CD4-positive, alpha-beta T cell (primary cell): ENCODE measurements at regions of chr22 and their contacts with region 1.

Region 1: GRCh38 chr22:39532215-39533071 is at the start of gene RPS19BP1:
- DNase-seq: peak; percentile 98 to 100 (median 99)
- ATAC-seq: peak; percentile 85
- H3K4me3 ChIP-seq: peak within 1 kb of the TSS; percentile 73
- H3K4me3 Mint-ChIP-seq: peak within 1 kb of the TSS; percentile 98
- H3K27ac ChIP-seq: peak within 1 kb of the TSS; percentile 74 to 91
- H3K27ac Mint-ChIP-seq: peak within 1 kb of the TSS; percentile 90
- H3K4me1 ChIP-seq: peaks cover 67% of the 10 kb centered on the region
- H3K4me1 Mint-ChIP-seq: peaks cover 64% of the 10 kb centered on the region
- H3K27me3 ChIP-seq: no peaks in the 10 kb centered on the region
- H3K27me3 Mint-ChIP-seq: no peaks in the 10 kb centered on the region
- CTCF ChIP-seq: no peak
- total RNA-seq, gene RPS19BP1: 65.8 to 69.7 TPM

Region 2: GRCh38 chr22:39170825-39171622 is 361.4 kb before region 1 on chr22:
- CTCF ChIA-PET with region 1: interaction called, 4 read pairs
- POLR2A ChIA-PET with region 1: interaction called, 4 read pairs
- intact Hi-C with region 1: loop called in 1 of 2 experiments (anchors 1 kb)
- DNase-seq: peak; percentile 63 to 90 (median 84)
- ATAC-seq: peak; percentile 74
- H3K4me3 ChIP-seq: peak overlapping the region; percentile 41
- H3K4me3 Mint-ChIP-seq: peak overlapping the region; percentile 69
- H3K27ac ChIP-seq: peak overlapping the region in 1 of 2 donors; percentile 58
- H3K27ac Mint-ChIP-seq: peak overlapping the region; percentile 97
- H3K4me1 ChIP-seq: peaks cover 58% of the 10 kb centered on the region
- H3K4me1 Mint-ChIP-seq: peaks cover 47% of the 10 kb centered on the region
- H3K27me3 ChIP-seq: no peaks in the 10 kb centered on the region
- H3K27me3 Mint-ChIP-seq: no peaks in the 10 kb centered on the region
- CTCF ChIP-seq: peak; percentile 99

Region 3: GRCh38 chr22:39405346-39406085 is 126.9 kb before region 1 on chr22:
- CTCF ChIA-PET with region 1: no interaction called
- POLR2A ChIA-PET with region 1: interaction called, 16 read pairs
- intact Hi-C with region 1: no loop called
- DNase-seq: peak in 2 of 14 experiments; percentile 11 to 15
- ATAC-seq: peak; percentile 93
- H3K4me3 ChIP-seq: no peak overlapping the region
- H3K4me3 Mint-ChIP-seq: peak overlapping the region; percentile 9
- H3K27ac ChIP-seq: no peak overlapping the region
- H3K27ac Mint-ChIP-seq: no peak overlapping the region
- H3K4me1 ChIP-seq: peaks cover 35% of the 10 kb centered on the region
- H3K4me1 Mint-ChIP-seq: peaks cover 70% of the 10 kb centered on the region
- H3K27me3 ChIP-seq: no peaks in the 10 kb centered on the region
- H3K27me3 Mint-ChIP-seq: no peaks in the 10 kb centered on the region
- CTCF ChIP-seq: no peak

Region 4: GRCh38 chr22:39514373-39514973 is 18.0 kb before region 1 on chr22:
- CTCF ChIA-PET with region 1: interaction called, 69 read pairs
- POLR2A ChIA-PET with region 1: interaction called, 129 read pairs
- intact Hi-C with region 1: loop called in 1 of 2 experiments (anchors 2 kb)
- DNase-seq: peak in 11 of 14 experiments; percentile 42 to 68 (median 51)
- ATAC-seq: peak; percentile 58
- H3K4me3 ChIP-seq: no peak overlapping the region
- H3K4me3 Mint-ChIP-seq: no peak overlapping the region
- H3K27ac ChIP-seq: no peak overlapping the region
- H3K27ac Mint-ChIP-seq: peak overlapping the region; percentile 4
- H3K4me1 ChIP-seq: peaks cover 8% of the 10 kb centered on the region
- H3K4me1 Mint-ChIP-seq: peaks cover 16% of the 10 kb centered on the region
- H3K27me3 ChIP-seq: no peaks in the 10 kb centered on the region
- H3K27me3 Mint-ChIP-seq: no peaks in the 10 kb centered on the region
- CTCF ChIP-seq: peak; percentile 69

Region 5: GRCh38 chr22:39946503-39947219 is 414.2 kb after region 1 on chr22:
- CTCF ChIA-PET with region 1: interaction called, 4 read pairs
- POLR2A ChIA-PET with region 1: no interaction called
- intact Hi-C with region 1: loop called (anchors 5 kb)
- DNase-seq: no peak
- ATAC-seq: no peak
- H3K4me3 ChIP-seq: no peak overlapping the region
- H3K4me3 Mint-ChIP-seq: peak overlapping the region; percentile 69
- H3K27ac ChIP-seq: peak overlapping the region; percentile 26 to 37
- H3K27ac Mint-ChIP-seq: no peak overlapping the region
- H3K4me1 ChIP-seq: peaks cover 94% of the 10 kb centered on the region
- H3K4me1 Mint-ChIP-seq: peaks cover 99% of the 10 kb centered on the region
- H3K27me3 ChIP-seq: no peaks in the 10 kb centered on the region
- H3K27me3 Mint-ChIP-seq: no peaks in the 10 kb centered on the region
- CTCF ChIP-seq: no peak

Region 6: GRCh38 chr22:40346178-40347118 is 814.0 kb after region 1 on chr22 and contains the start of gene ADSL:
- CTCF ChIA-PET with region 1: interaction called, 6 read pairs
- POLR2A ChIA-PET with region 1: no interaction called
- intact Hi-C with region 1: loop called (anchors 1 kb)
- DNase-seq: peak; percentile 72 to 91 (median 80)
- ATAC-seq: peak; percentile 74
- H3K4me3 ChIP-seq: peak within 1 kb of the TSS; percentile 91
- H3K4me3 Mint-ChIP-seq: peak within 1 kb of the TSS; percentile 96
- H3K27ac ChIP-seq: peak within 1 kb of the TSS; percentile 81 to 89
- H3K27ac Mint-ChIP-seq: peak within 1 kb of the TSS; percentile 98
- H3K4me1 ChIP-seq: peaks cover 65% of the 10 kb centered on the region
- H3K4me1 Mint-ChIP-seq: peaks cover 52% of the 10 kb centered on the region
- H3K27me3 ChIP-seq: no peaks in the 10 kb centered on the region
- H3K27me3 Mint-ChIP-seq: no peaks in the 10 kb centered on the region
- CTCF ChIP-seq: no peak
- total RNA-seq, gene ADSL: 62.9 to 75.3 TPM